Activated CD8-positive, alpha-beta memory T cell treated with anti-CD3 and anti-CD28 coated beads, Interleukin-2, amount 10 ng/mL, durations not matched to agents 7 days and 5 days (primary cell): ENCODE measurements at regions of chr7 and their contacts with region 1.

Region 1: DNA sequence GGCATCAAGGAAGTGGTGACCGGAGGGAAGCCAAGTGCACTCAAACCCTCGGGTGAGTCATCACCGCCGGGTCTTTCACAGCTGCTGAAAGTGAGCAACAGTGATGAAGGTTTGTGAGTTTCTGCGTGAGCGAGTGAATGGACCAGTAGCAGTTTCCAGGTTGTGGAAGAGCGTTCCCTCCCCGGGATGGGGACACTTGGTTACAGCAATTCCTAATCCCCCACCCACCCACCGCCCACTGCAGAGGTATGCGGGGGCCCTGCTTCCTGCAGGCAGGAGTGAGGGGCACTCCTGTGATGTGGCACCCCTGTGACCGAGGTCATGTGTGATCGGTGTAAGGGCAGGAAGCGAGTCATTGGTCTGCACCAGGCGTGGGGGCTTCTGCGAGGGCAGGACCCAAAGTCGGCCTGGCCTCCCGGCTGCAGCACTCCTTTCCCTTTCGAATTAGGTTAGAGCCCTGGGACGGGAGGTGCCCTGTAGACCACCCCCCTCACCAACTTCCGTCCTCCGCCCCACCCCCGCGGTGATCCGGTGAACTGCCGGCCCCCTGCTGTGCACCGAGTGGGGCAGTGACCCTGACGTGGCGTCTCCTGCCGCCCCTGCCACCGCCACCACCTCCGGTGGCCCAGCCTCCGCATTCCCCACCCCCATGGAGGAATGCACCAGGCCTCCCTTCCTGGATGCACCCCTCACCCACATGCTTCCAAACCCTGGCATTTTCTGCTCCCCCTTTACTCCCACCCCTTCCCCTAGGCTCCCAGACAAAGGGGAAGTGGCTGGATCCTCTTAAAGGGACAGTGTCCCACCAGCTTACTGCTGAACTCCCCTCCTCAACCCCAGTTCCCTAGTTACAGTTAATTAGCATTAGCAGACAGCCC is 10.9 kb downstream of the LIMK1 start:
- DNase-seq: peak; percentile 93
- ATAC-seq: peak; percentile 79
- H3K4me3 Mint-ChIP-seq: peak overlapping the region; percentile 81
- H3K27ac Mint-ChIP-seq: peak overlapping the region; percentile 95
- H3K4me1 Mint-ChIP-seq: peaks cover 33% of the 10 kb centered on the region
- H3K27me3 Mint-ChIP-seq: no peaks in the 10 kb centered on the region

Region 2: GRCh38 chr7:74173866-74174605 is 79.6 kb after region 1 on chr7 and contains the start of gene EIF4H:
- CTCF ChIA-PET with region 1: interaction called, 10 read pairs
- DNase-seq: peak; percentile 94
- ATAC-seq: peak; percentile 88
- H3K4me3 Mint-ChIP-seq: peak within 1 kb of the TSS; percentile 87
- H3K27ac Mint-ChIP-seq: peak within 1 kb of the TSS; percentile 86
- H3K4me1 Mint-ChIP-seq: peaks cover 41% of the 10 kb centered on the region
- H3K27me3 Mint-ChIP-seq: no peaks in the 10 kb centered on the region
- total RNA-seq, gene EIF4H: 278 to 322 TPM